Naive thymus-derived CD4-positive, alpha-beta T cell (primary cell): ENCODE measurements at regions of chr5 and their contacts with region 1.

Region 1: GRCh38 chr5:543825-544674 is 19.8 kb upstream of the SLC9A3 start:
- DNase-seq: peak in 7 of 9 donors; percentile 24 to 60 (median 50)
- ATAC-seq: peak; percentile 81
- H3K4me3 ChIP-seq: peak overlapping the region; percentile 48
- H3K4me3 Mint-ChIP-seq: peak overlapping the region; percentile 55 to 84 (median 76)
- H3K27ac ChIP-seq: peak overlapping the region; percentile 8
- H3K27ac Mint-ChIP-seq: peak overlapping the region; percentile 49 to 95 (median 84)
- H3K4me1 ChIP-seq: peaks cover 14 to 15% of the 10 kb centered on the region in 2 donors
- H3K4me1 Mint-ChIP-seq: peaks cover 7 to 18% (median 10%) of the 10 kb centered on the region in 7 donors
- H3K27me3 ChIP-seq: no peaks in the 10 kb centered on the region
- H3K27me3 Mint-ChIP-seq: peaks cover 3 to 23% (median 7%) of the 10 kb centered on the region in 5 donors

Region 2: DNA sequence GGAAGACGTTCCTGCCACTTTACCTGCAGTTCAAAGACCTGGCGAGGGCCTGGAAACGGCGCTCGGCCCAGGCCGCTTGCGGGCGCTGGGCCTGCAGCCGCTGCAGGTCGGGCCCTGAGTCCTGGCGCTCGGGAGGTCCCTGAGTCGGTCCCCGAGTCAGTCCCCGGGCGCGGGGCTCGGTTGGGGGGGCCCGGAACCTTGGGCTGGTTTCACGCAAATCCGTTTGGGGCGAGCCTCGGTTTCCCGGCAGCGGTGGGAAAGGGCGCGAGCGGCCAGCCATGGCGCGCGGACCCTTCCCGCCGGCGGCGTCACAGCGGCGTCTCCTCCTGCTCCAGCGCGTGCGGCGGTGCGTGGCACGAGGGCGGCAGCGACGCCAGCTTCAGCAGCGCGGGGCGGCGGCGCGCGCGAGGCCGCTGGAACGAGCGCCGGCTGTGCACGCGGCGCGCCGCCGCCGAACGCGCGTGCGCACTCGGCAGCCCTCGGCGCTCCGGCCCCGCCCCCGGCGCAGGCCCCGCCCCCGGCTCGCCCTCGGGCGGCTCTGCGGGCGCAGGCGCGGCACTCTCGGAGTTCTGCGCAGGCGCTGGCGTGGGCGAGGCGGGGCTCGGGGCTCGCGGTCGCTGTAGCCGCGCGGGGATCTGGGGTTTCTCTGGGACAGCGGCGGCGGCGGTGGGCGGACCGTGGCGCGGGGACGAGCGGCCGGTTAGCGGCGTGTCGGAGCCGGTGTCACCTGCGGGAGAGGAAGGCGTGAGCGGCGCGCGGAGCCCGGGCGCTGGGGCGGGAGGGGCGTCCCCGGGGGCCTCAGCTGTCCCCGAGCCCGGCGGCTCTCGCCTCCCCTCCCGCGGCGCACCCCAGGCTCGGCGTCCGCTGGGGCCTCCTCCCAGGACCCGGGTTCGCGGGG is 71.1 kb before region 1 on chr5:
- CTCF ChIA-PET with region 1: no interaction called
- POLR2A ChIA-PET with region 1: no interaction called
- intact Hi-C with region 1: loop called in 1 of 2 experiments (anchors 1 kb)
- DNase-seq: peak; percentile 82 to 97 (median 90)
- ATAC-seq: peak; percentile 89
- H3K4me3 ChIP-seq: peak overlapping the region; percentile 82
- H3K4me3 Mint-ChIP-seq: peak overlapping the region; percentile 80 to 91 (median 84)
- H3K27ac ChIP-seq: peak overlapping the region; percentile 95
- H3K27ac Mint-ChIP-seq: peak overlapping the region in 6 of 9 donors; percentile 15 to 89 (median 84)
- H3K4me1 ChIP-seq: peaks cover 14 to 18% of the 10 kb centered on the region in 2 donors
- H3K4me1 Mint-ChIP-seq: peaks cover 13 to 22% (median 19%) of the 10 kb centered on the region in 7 donors
- H3K27me3 ChIP-seq: peaks cover 0 to 3% of the 10 kb centered on the region in 2 donors
- H3K27me3 Mint-ChIP-seq: peaks cover 0 to 10% (median 8%) of the 10 kb centered on the region in 5 donors

Region 3: DNA sequence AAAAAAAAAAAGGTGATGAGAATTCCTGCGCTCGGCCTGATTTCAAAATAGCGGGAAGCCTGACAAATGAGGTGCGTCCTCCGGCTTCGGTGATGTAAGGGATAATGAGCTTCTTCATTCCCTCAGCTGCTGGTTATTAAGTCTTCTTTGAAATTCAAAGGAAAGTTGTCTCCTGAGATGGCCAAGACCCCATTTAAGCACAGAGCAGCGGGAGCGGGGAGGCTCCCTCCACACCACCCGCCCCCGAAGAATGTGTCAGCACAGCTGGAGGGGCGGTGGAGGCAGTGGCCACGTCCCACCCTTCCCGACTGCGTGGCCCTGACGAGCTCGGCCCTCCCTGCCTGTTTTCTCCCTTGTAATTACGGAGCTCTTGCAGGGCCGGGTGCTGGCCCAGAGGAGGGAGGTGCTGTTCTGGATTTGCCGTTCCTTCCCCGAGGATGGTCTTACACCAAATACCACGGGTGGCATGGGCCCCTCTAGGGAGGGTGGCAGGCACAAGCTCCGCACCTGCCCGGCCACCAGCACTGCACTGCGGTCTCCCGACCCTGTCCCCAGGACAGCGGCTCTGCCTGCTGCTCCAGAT is 50.8 kb before region 1 on chr5:
- CTCF ChIA-PET with region 1: no interaction called
- POLR2A ChIA-PET with region 1: no interaction called
- intact Hi-C with region 1: no loop called
- DNase-seq: no peak
- ATAC-seq: no peak
- H3K4me3 ChIP-seq: no peak overlapping the region
- H3K4me3 Mint-ChIP-seq: no peak overlapping the region
- H3K27ac ChIP-seq: no peak overlapping the region
- H3K27ac Mint-ChIP-seq: no peak overlapping the region
- H3K4me1 ChIP-seq: no peaks in the 10 kb centered on the region
- H3K4me1 Mint-ChIP-seq: peaks cover 0 to 1% (median 0%) of the 10 kb centered on the region in 7 donors
- H3K27me3 ChIP-seq: no peaks in the 10 kb centered on the region
- H3K27me3 Mint-ChIP-seq: peaks cover 0 to 12% (median 0%) of the 10 kb centered on the region in 5 donors